AG04449 (cell line): ENCODE measurements at regions of chr6 and their contacts with region 1.

Region 1: DNA sequence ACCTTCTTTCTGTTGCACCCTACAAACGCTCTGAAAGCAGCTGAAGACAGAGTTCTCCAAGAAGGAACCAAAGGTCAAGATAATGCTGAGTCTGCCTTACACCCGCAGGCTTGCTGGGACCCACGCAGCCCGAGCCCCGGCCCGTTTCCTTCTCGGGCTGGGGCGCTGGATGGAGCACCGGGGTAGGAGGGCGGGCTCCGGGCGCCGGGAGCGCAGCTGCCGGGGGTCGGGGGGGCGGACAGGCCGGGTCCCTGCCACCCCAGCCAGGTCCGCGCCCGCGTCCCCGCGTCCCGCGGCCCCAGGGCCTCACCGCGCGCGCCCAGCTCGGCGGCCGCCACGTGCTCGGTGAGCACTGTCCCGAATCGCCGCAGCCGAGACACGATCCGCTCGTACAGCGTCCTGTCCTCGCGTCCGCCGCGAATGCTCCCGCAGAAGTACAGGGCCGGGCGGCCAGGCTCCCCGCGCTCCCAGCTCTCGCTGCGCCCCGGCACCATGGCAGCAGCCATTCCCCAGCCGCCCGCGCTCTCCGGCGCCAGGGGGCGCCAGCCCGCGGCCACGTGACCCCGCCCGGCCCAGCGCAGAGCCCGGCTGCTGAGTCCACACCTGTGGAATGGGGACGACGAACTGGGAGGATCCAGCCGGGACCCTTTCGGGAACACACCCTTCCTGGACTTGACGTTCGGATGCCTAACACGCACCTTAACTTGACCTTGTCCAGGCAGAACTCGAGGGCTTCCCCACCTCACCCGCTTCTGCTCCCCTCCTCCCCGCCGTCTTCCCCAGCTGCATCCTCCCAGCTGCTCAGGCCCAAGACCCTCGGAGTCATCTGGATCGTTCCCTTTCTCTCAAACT is at the start of gene DNPH1:
- DNase-seq: no peak
- H3K4me3 ChIP-seq: peak within 1 kb of the TSS; percentile 70
- CTCF ChIP-seq: peak; percentile 62

Region 2: DNA sequence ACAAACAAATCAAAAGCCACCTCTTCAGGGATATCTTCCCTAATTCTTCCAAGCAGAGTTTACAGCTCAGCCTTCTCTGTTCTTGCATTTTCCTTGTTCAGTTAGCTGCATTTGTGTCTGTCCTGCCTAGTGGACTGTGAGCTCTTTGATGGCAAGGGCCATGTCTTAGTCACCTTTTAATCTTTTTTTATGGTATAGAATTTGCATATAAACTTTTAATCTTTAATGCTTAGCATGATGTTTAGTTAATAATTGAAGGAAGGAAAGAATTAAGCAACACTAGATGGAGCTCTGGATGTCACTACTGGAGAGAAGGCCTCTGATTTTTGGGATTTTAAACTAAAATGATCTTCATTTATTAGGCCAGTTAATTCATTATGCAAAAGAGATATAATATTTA is 232.7 kb before region 1 on chr6:
- CTCF ChIA-PET with region 1: no interaction called
- POLR2A ChIA-PET with region 1: no interaction called
- DNase-seq: no peak
- H3K4me3 ChIP-seq: no peak overlapping the region
- CTCF ChIP-seq: no peak

Region 3: GRCh38 chr6:43113431-43114260 is 115.5 kb before region 1 on chr6:
- CTCF ChIA-PET with region 1: no interaction called
- POLR2A ChIA-PET with region 1: no interaction called
- DNase-seq: no peak
- H3K4me3 ChIP-seq: no peak overlapping the region
- CTCF ChIP-seq: no peak

Region 4: GRCh38 chr6:43203029-43203717 is 26.0 kb before region 1 on chr6:
- CTCF ChIA-PET with region 1: interaction called, 12 read pairs
- POLR2A ChIA-PET with region 1: no interaction called
- DNase-seq: no peak
- H3K4me3 ChIP-seq: no peak overlapping the region
- CTCF ChIP-seq: no peak

Region 5: GRCh38 chr6:43254138-43254817 is 25.1 kb after region 1 on chr6:
- CTCF ChIA-PET with region 1: interaction called, 10 read pairs
- POLR2A ChIA-PET with region 1: no interaction called
- DNase-seq: no peak
- H3K4me3 ChIP-seq: no peak overlapping the region
- CTCF ChIP-seq: no peak

Region 6: GRCh38 chr6:43308101-43308989 is 79.2 kb after region 1 on chr6 and contains the start of gene CRIP3:
- CTCF ChIA-PET with region 1: interaction called, 10 read pairs
- POLR2A ChIA-PET with region 1: no interaction called
- DNase-seq: no peak
- H3K4me3 ChIP-seq: peak within 1 kb of the TSS; percentile 49
- CTCF ChIP-seq: peak; percentile 29

Region 7: GRCh38 chr6:43355862-43356590 is 126.8 kb after region 1 on chr6:
- CTCF ChIA-PET with region 1: interaction called, 19 read pairs
- POLR2A ChIA-PET with region 1: no interaction called
- DNase-seq: no peak
- H3K4me3 ChIP-seq: no peak overlapping the region
- CTCF ChIP-seq: peak; percentile 34